Psoas muscle (tissue), 8 donors: ENCODE measurements at regions of chr10 and their contacts with region 1.

Region 1: GRCh38 chr10:132142411-132143161 is 44.2 kb upstream of the DPYSL4 start:
- DNase-seq: peak; percentile 44 to 72
- ATAC-seq: peak; percentile 82 to 90 (median 88)
- H3K4me3 ChIP-seq: no peak overlapping the region
- H3K27ac ChIP-seq: no peak overlapping the region
- H3K4me1 ChIP-seq: no peaks in the 10 kb centered on the region
- H3K27me3 ChIP-seq: no peaks in the 10 kb centered on the region
- CTCF ChIP-seq: peak; percentile 84

Region 2: GRCh38 chr10:131885391-131886161 is 257.0 kb before region 1 on chr10:
- intact Hi-C with region 1: loop called (anchors 2 to 5 kb)
- DNase-seq: peak; percentile 77 to 89
- ATAC-seq: peak; percentile 96 to 100 (median 98)
- H3K4me3 ChIP-seq: no peak overlapping the region
- H3K27ac ChIP-seq: no peak overlapping the region
- H3K4me1 ChIP-seq: no peaks in the 10 kb centered on the region
- H3K27me3 ChIP-seq: peaks cover 0 to 6% (median 3%) of the 10 kb centered on the region in 3 donors
- CTCF ChIP-seq: peak; percentile 98

Region 3: GRCh38 chr10:132036153-132036886 is 106.3 kb before region 1 on chr10:
- intact Hi-C with region 1: loop called (anchors 5 to 10 kb)
- DNase-seq: peak in 1 of 2 donors; percentile 67
- ATAC-seq: peak; percentile 62 to 82 (median 74)
- H3K4me3 ChIP-seq: peak overlapping the region; percentile 66
- H3K27ac ChIP-seq: no peak overlapping the region
- H3K4me1 ChIP-seq: peaks cover 3% of the 10 kb centered on the region
- H3K27me3 ChIP-seq: peaks cover 0 to 31% (median 0%) of the 10 kb centered on the region in 3 donors
- CTCF ChIP-seq: no peak

Region 4: GRCh38 chr10:132065491-132066105 is 77.0 kb before region 1 on chr10 and contains the start of gene JAKMIP3:
- intact Hi-C with region 1: no loop called
- DNase-seq: peak; percentile 54 to 65
- ATAC-seq: peak; percentile 74 to 82 (median 74)
- H3K4me3 ChIP-seq: peak within 1 kb of the TSS; percentile 72
- H3K27ac ChIP-seq: peak within 1 kb of the TSS; percentile 76
- H3K4me1 ChIP-seq: peaks cover 4% of the 10 kb centered on the region
- H3K27me3 ChIP-seq: no peaks in the 10 kb centered on the region
- CTCF ChIP-seq: no peak
- total RNA-seq, gene JAKMIP3: 0.49 to 1.7 (median 0.54) TPM

Region 5: DNA sequence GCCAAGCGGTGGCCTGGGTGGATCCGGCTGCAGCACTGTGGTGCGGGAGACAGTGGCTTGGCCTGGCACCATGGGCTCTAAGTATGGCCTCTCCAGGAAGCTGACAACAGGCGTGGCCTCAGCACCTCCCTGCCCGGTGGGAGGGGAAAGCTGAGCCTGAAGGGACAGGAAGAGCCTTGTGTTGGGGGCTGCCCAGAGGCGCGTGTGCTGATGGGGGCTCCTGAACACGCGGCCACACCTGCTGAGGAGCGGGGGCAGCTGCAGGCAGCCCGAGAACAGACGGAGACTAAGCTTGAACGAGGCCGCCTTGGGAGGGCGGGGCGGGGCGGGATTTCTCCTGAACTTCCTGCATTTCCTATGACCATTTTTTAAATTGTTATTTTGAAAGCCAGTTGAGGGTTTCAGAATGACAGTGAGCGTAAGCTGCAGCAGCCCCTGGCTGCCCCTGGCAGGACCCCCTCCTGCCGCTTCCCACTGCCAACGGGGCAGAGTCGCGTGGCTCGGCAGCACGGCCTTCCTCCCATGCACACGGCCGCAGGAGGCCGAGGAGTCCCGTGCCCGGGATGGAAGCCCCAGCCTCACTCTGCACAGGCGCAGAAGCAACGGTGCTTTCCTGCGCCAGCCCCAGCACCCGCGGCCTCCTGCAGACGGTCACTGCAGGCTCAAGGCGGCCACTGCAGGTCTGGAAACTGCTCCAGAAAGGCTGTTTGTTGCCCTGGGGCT is 87.4 kb after region 1 on chr10:
- intact Hi-C with region 1: no loop called
- DNase-seq: peak in 1 of 2 donors; percentile 37
- ATAC-seq: peak; percentile 25 to 76 (median 59)
- H3K4me3 ChIP-seq: peak overlapping the region; percentile 49
- H3K27ac ChIP-seq: no peak overlapping the region
- H3K4me1 ChIP-seq: no peaks in the 10 kb centered on the region
- H3K27me3 ChIP-seq: no peaks in the 10 kb centered on the region
- CTCF ChIP-seq: no peak